ENCODE measurements at regions of chr20 and their contacts with region 1.

Region 1: GRCh38 chr20:4406627-4407026 is 315.1 kb upstream of the PRND start:
- DNase-seq: no peak
- H3K4me3 ChIP-seq: no peak overlapping the region
- CTCF ChIP-seq: no peak

Region 2: GRCh38 chr20:4358552-4358951 is 48.1 kb before region 1 on chr20:
- in situ Hi-C with region 1: loop called (anchors 5 kb)
- DNase-seq: no peak
- H3K4me3 ChIP-seq: no peak overlapping the region
- CTCF ChIP-seq: no peak